Mucosa of descending colon (tissue), 3 donors: ENCODE measurements at regions of chr1 and their contacts with region 1.

Region 1: DNA sequence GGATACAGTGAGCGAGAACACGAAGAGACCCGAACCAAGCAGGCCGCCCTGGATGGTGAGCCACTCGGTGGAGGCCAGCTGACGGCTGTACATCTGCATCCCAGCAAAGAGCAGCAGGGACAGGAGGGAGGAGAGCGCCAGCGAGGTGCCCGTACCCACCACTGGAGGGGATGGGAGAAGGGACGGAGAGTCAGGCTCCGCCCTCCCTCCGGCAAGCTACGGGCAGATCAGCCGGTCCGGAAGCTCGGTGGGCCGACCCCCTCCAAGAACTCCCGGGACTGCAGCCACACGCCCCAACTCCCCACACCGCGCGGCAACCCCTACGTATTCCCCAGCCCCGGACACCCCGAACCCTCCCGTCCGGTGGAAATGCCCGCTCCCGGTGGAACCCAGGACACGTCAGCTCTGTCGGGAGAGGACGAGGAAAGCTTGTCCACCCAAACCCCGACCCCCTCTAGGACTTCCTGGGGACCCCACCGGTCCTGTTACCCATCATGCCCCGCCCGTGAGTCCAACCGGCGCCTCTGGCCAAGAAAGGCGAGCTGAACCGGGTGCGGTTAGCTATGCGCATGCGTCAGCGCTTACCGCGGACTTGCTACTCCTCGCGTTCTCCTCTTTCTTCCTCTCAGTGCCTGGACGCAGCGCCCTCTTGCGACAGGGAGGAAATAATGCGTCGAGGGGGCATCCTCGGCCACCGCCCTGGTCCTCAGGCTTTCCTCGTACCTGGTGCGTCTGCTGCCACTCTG is at the start of gene KRTCAP2:
- DNase-seq: peak; percentile 92 to 98 (median 96)
- ATAC-seq: peak; percentile 89
- H3K4me3 ChIP-seq: peak within 1 kb of the TSS; percentile 61
- H3K4me1 ChIP-seq: peaks cover 25% of the 10 kb centered on the region
- CTCF ChIP-seq: peak; percentile 92
- total RNA-seq, gene KRTCAP2: 162 to 190 (median 176) TPM

Region 2: GRCh38 chr1:155227261-155228095 is 54.6 kb after region 1 on chr1:
- intact Hi-C with region 1: loop called in 1 of 2 experiments (anchors 10 kb)
- DNase-seq: peak; percentile 97 to 99 (median 99)
- ATAC-seq: peak; percentile 98
- H3K4me3 ChIP-seq: peak overlapping the region; percentile 42
- H3K4me1 ChIP-seq: peaks cover 16% of the 10 kb centered on the region
- CTCF ChIP-seq: no peak